Pancreas (tissue), 10 donors: ENCODE measurements at regions of chr10 and their contacts with region 1.

Region 1: GRCh38 chr10:61140765-61141392 is 196.9 kb upstream of the RHOBTB1 start:
- DNase-seq: peak in 4 of 6 donors; percentile 16 to 46 (median 22)
- ATAC-seq: peak; percentile 66 to 98 (median 94)
- H3K4me3 ChIP-seq: peak overlapping the region in 1 of 4 donors; percentile 13
- H3K27ac ChIP-seq: no peak overlapping the region
- H3K4me1 ChIP-seq: no peaks in the 10 kb centered on the region
- H3K27me3 ChIP-seq: no peaks in the 10 kb centered on the region
- CTCF ChIP-seq: peak; percentile 38 to 69 (median 54)

Region 2: GRCh38 chr10:60896033-60896432 is 244.8 kb before region 1 on chr10:
- intact Hi-C with region 1: no loop called
- DNase-seq: no peak
- ATAC-seq: peak in 1 of 4 donors; percentile 29
- H3K4me3 ChIP-seq: no peak overlapping the region
- H3K27ac ChIP-seq: no peak overlapping the region
- H3K4me1 ChIP-seq: peaks cover 0 to 15% (median 0%) of the 10 kb centered on the region in 3 donors
- H3K27me3 ChIP-seq: no peaks in the 10 kb centered on the region
- CTCF ChIP-seq: no peak

Region 3: DNA sequence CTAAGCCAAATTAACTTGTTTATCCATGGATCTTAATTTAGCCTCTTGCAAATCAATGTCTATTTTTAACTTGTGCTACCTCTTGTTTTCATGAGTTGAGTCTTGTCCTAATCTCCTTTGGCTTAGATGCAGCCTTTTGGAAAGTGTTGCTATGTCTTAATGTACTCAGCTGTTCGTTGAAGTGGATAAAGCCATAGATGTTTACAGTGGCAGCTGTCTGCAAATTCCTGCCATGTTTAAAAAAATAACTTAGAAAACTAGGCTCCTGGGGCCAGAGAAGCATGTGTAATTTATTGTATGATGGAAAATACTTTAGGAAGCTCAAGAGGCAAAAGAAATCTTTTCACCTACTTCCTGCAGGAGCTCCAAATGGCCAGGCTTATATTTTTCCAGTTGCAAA is 56.2 kb after region 1 on chr10:
- intact Hi-C with region 1: loop called in 1 of 3 experiments (anchors 10 kb)
- DNase-seq: no peak
- ATAC-seq: peak in 3 of 4 donors; percentile 27 to 68 (median 66)
- H3K4me3 ChIP-seq: no peak overlapping the region
- H3K27ac ChIP-seq: no peak overlapping the region
- H3K4me1 ChIP-seq: peaks cover 0 to 9% (median 0%) of the 10 kb centered on the region in 3 donors
- H3K27me3 ChIP-seq: no peaks in the 10 kb centered on the region
- CTCF ChIP-seq: no peak

Region 4: GRCh38 chr10:61271127-61271823 is 130.4 kb after region 1 on chr10:
- intact Hi-C with region 1: loop called in 1 of 3 experiments (anchors 10 kb)
- DNase-seq: no peak
- ATAC-seq: peak; percentile 43 to 98 (median 78)
- H3K4me3 ChIP-seq: no peak overlapping the region
- H3K27ac ChIP-seq: no peak overlapping the region
- H3K4me1 ChIP-seq: no peaks in the 10 kb centered on the region
- H3K27me3 ChIP-seq: no peaks in the 10 kb centered on the region
- CTCF ChIP-seq: no peak